ENCODE measurements at regions of chr3 and their contacts with region 1.

Region 1: GRCh38 chr3:12484198-12484974 is at the start of gene TSEN2:
- DNase-seq: peak; percentile 98 to 100 (median 100)
- ATAC-seq: peak; percentile 96
- H3K4me3 ChIP-seq: peak within 1 kb of the TSS; percentile 82
- H3K27ac ChIP-seq: peak within 1 kb of the TSS; percentile 84
- H3K4me1 ChIP-seq: peaks cover 19 to 22% of the 10 kb centered on the region in 2 experiments
- H3K27me3 ChIP-seq: peaks cover 0 to 5% of the 10 kb centered on the region in 2 experiments; a peak in 2 of 5 replicates
- CTCF ChIP-seq: peak; percentile 46 to 57 (median 55)
- EP300 ChIP-seq: peak; percentile 6; the same call in 1 of the 2 replicates
- POLR2A ChIP-seq: peak; percentile 94
- RAD21 ChIP-seq: peak in 1 of 2 experiments; percentile 62; a peak in 3 of 4 replicates
- polyA plus RNA-seq, gene TSEN2: 39.3 to 76.3 TPM

Region 2: DNA sequence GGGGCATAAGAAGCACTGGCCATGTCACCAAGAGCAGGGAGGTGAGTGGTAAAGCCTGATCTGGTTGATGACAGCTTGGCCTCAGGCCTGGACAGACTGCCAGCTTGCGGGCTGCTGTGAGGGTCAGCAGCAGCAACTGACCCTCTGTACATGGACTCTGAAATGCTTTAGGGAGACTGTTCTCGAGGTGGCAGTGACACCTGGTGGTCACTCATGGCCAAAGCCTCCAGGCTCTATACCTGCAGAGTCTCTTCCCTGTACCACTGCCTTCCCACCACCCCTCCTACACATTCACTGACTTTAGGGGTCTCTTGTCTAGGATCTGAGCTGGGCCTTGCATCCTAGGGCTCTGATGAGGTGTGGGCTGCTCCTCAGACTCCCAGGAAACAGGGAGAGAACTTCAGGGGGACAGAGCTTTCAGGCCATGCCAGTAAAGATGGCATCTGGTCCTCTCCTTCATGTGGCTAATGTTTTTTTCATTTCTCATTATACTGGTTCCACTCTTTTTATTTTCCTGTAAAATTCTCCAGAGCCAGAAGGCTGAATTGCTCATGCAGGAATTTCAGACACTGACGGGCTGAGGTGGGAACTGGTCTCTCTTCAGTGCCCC is 308.4 kb before region 1 on chr3:
- CTCF ChIA-PET with region 1: interaction called, 3 read pairs
- POLR2A ChIA-PET with region 1: interaction called, 3 read pairs
- in situ Hi-C with region 1: no loop called
- intact Hi-C with region 1: loop called (anchors 5 kb)
- DNase-seq: peak; percentile 67 to 72 (median 69)
- ATAC-seq: peak; percentile 98
- H3K4me3 ChIP-seq: no peak overlapping the region
- H3K27ac ChIP-seq: no peak overlapping the region
- H3K4me1 ChIP-seq: no peaks in the 10 kb centered on the region
- H3K27me3 ChIP-seq: peaks cover 0 to 4% of the 10 kb centered on the region in 2 experiments; a peak in 2 of 5 replicates
- CTCF ChIP-seq: peak; percentile 79 to 90 (median 90)
- EP300 ChIP-seq: no peak
- POLR2A ChIP-seq: no peak
- RAD21 ChIP-seq: peak; percentile 92 to 97

Region 3: GRCh38 chr3:12187448-12188327 is 296.7 kb before region 1 on chr3:
- CTCF ChIA-PET with region 1: no interaction called
- POLR2A ChIA-PET with region 1: no interaction called
- in situ Hi-C with region 1: no loop called
- intact Hi-C with region 1: loop called (anchors 5 kb)
- DNase-seq: no peak
- ATAC-seq: peak; percentile 33; the same call in 1 of the 3 replicates
- H3K4me3 ChIP-seq: no peak overlapping the region
- H3K27ac ChIP-seq: no peak overlapping the region
- H3K4me1 ChIP-seq: peaks cover 3 to 16% of the 10 kb centered on the region in 2 experiments; a peak in 3 of 5 replicates
- H3K27me3 ChIP-seq: peaks cover 0 to 37% of the 10 kb centered on the region in 2 experiments; a peak in 2 of 5 replicates
- CTCF ChIP-seq: no peak
- EP300 ChIP-seq: no peak
- POLR2A ChIP-seq: no peak
- RAD21 ChIP-seq: no peak

Region 4: DNA sequence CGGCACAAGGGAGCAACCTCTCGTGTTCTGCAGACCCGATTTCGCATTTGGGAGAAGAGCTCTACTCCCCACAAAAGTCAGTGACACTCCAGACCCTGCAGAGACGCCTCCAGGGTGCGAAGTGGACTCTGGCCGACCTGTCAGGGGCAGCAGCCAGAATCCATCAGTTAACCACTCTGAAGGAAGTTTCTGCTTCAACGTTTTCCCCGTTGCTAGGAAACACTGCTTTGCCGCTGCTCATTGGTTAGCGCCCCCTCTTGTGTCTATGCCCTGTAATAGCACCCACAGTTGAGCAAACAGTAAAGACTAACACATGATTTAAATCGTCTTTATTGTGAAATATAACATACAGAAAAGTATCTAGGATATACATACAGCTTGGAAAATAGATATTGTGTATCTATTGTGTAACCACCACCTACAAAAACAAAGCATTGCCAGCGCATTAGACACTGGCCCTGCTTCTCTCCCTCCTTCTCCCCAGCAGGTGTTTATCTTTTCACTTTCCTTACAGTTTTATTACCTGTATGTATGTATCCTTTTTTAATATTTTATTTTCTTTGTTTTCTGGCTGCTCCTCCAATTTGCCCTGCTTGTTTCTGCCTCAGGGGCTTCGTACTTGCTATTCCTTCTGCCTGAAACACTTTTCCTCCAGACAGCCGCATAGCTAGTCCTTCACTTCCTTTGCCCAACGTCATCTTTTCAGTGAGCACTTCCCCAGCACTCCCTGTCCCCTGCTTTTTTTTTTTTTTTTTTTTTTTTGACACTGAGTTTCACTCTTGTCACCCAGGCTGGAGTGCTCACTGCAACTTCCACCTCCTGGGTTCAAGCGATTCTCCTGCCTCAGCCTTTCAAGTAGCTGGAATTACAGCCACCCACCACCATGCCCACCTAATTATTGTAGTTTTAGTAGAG is 235.9 kb after region 1 on chr3:
- CTCF ChIA-PET with region 1: no interaction called
- POLR2A ChIA-PET with region 1: no interaction called
- in situ Hi-C with region 1: no loop called
- intact Hi-C with region 1: loop called (anchors 5 kb)
- DNase-seq: peak; percentile 86 to 89 (median 87)
- ATAC-seq: peak; percentile 89
- H3K4me3 ChIP-seq: no peak overlapping the region
- H3K27ac ChIP-seq: no peak overlapping the region
- H3K4me1 ChIP-seq: peaks cover 0 to 10% of the 10 kb centered on the region in 2 experiments; a peak in 3 of 5 replicates
- H3K27me3 ChIP-seq: no peaks in the 10 kb centered on the region; a peak in 1 of 5 replicates
- CTCF ChIP-seq: peak; percentile 90 to 99 (median 99)
- EP300 ChIP-seq: peak; percentile 48; the same call in 1 of the 2 replicates
- POLR2A ChIP-seq: no peak
- RAD21 ChIP-seq: peak; percentile 71 to 85

Region 5: DNA sequence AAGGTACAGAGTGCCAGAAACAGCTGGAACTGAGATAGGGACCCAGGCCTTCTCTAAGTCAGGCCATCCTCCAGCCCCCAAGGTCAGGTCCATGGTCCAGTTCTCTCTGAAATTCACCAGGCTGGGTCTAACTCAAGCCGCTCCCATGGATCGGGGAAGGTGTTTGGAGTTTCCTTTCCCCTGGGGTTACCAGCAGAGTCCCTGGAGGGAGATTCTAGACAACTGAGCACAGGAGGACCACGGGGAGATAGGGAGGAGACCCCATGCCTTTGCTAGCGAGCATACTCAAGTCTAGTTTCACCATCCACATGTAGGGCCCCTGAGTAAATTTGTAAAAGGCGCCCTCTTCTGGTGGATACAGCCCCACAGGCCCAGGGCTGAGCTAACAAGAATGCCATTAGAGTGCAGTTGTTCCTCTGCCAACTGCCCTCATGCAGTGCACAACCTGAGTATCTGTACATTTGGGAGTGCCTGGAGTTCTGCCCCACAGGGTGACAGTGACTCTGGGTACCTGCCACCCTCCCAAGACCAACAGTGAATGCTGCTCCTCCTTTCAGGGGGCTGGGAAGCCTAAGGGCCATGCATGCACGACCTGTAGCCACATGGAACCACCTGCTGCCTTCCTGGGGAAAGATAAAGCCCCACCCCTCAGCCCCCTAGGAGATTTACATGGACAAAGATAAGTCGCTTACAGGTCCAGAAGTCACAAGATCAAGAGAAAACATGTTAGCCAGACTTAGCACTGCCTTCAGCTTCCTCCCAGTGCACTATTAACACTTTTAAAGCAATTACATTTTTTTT is 499.8 kb after region 1 on chr3:
- CTCF ChIA-PET with region 1: no interaction called
- POLR2A ChIA-PET with region 1: no interaction called
- in situ Hi-C with region 1: no loop called
- intact Hi-C with region 1: no loop called
- DNase-seq: peak; percentile 82 to 93 (median 86)
- ATAC-seq: peak; percentile 98
- H3K4me3 ChIP-seq: no peak overlapping the region
- H3K27ac ChIP-seq: peak overlapping the region; percentile 57
- H3K4me1 ChIP-seq: peaks cover 19 to 53% of the 10 kb centered on the region in 2 experiments; a peak in 4 of 5 replicates
- H3K27me3 ChIP-seq: no peaks in the 10 kb centered on the region
- CTCF ChIP-seq: peak; percentile 93 to 98 (median 95)
- EP300 ChIP-seq: peak; percentile 20; the same call in 1 of the 2 replicates
- POLR2A ChIP-seq: no peak
- RAD21 ChIP-seq: peak; percentile 89 to 96

Measured in K562 (cell line).